ENCODE measurements at regions of chr13 and their contacts with region 1.

Region 1: DNA sequence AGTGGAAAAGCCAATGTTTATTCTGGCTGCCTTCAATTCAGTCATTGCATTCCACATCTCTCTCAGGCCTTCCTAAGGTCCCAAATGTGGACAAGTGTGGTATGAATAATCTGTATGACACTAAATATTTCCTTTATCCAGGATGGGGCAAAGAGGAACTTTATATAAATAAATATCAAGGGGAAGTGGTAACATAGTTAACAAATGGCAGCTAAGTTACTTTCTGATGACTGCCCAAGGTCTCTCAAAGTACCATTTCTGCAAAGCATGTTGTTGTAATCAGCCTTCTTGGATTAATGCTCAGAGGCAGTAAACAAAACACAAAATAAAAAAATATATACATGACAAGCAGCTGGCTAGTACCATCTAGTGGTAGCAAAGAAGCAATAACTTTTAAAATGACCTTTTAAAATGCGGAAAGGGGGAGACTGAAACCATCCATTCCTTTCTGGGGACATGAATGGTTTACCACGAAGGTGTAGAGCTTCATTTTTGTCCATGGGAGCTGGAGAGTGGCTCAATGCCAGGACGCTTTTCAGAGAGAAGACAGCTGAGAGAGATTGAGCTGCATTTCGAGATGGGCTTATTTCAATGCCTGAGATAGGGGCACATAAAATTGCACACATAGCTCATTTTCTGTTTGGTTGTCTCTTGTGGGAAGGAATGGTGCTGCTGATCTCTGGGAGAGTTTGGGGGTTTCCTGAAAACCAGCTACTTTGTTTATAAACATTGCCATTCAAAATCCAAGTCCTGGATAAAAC is 259.2 kb downstream of the RFC3 start:
- DNase-seq: no peak
- CTCF ChIP-seq: peak; percentile 47

Region 2: GRCh38 chr13:33931397-33932311 is 145.5 kb before region 1 on chr13:
- CTCF ChIA-PET with region 1: interaction called, 20 read pairs
- POLR2A ChIA-PET with region 1: no interaction called
- DNase-seq: no peak
- CTCF ChIP-seq: peak; percentile 39

Region 3: DNA sequence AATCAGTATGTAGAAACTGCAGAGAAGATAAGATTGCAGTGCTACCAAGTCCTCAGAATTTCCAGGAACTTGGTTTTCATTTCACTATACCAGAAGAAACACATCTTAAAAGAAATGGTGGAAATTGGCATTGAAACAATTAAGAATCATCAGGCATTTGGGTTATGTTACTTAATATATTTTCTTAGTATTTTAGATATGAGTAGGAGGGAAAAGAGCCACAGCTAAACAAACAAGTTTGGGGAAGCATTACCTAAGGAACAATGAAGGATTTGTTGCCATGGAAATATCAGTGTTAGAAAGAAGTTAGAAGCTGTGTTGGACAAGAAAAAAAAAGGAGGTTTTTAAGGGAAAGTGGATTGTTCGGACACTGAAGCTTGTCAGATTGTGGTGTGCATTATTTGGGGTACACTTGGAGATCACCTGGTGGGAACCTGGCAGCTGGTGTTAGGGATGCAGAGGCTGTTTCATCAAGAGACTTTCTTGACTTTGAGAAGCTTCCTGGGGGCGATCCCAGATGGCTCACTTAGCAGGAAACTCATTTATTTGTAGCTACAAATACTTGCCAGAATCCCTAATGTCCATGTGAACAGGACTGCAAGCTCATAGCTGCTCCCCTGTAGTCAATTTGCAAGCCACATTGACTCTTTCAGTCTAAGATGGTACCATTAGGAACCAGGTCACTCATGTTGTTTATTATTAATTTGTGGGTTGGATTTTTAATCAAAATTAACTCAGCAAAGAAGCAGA is 12.5 kb before region 1 on chr13:
- CTCF ChIA-PET with region 1: interaction called, 14 read pairs
- POLR2A ChIA-PET with region 1: no interaction called
- DNase-seq: no peak
- CTCF ChIP-seq: no peak

Region 4: GRCh38 chr13:34224877-34225276 is 147.8 kb after region 1 on chr13:
- CTCF ChIA-PET with region 1: no interaction called
- POLR2A ChIA-PET with region 1: no interaction called
- DNase-seq: no peak
- CTCF ChIP-seq: no peak

Region 5: DNA sequence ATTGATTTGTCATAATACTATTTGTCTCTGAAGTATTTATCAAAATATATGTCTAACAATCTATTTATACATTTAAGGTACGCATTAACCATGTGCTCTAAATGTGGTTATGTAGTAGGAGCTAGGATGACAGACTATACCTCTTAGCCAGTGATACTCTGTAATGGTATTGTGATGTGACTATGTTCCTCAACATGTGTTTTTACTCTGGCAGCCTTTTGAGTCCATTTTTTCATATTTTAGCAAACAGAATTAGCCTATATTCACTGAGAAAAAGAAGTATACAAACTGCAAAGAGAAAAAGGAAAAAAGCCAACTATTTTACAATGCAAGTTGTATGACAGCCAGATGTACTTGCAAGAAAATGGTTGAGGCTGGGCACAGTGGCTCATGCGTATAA is 1372.7 kb after region 1 on chr13:
- CTCF ChIA-PET with region 1: no interaction called
- POLR2A ChIA-PET with region 1: no interaction called
- DNase-seq: no peak
- CTCF ChIP-seq: no peak

Measured in GM10248 (cell line).